Sciatic nerve (tissue), 2 donors: ENCODE measurements at regions of chr2 and their contacts with region 1.

Region 1: DNA sequence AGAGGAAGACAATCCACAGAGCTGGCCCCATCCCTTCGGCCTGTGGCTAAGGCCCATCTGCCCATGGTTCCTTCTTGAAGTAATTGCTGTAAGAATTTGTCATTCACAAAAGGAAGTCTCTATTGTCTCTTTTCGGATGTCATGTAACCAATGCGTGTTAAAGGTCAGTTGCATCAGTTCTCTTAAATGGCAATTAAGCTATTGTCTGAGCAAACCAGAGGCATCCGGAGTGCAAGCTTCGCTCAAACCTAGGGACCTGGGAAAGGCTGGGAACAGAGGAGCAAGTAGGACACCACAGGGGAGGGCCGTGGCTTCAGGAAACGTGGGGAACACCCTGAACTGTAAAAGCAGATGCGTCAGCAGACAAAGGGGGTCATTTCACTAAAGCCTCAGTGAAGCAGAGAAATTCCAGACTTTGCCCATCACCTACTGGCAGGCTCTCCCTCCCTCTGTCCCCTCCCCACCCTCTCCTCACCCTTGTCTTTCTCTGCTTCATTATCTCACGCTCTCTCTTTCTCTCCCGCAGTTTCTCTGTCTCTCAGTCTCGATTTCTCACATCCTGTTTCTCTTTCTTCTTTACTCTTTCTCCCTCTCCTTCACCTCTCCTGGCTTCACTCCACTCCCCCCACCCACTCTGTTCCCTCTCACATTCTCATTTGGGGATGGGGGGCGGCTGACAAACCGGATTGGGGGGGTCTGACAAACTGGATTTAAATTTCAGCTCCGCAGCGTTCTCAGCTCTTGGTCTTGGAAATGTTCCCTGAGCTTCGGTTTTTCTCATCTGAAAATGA is 204.6 kb upstream of the TNP1 start:
- DNase-seq: no peak
- ATAC-seq: peak; percentile 78

Region 2: DNA sequence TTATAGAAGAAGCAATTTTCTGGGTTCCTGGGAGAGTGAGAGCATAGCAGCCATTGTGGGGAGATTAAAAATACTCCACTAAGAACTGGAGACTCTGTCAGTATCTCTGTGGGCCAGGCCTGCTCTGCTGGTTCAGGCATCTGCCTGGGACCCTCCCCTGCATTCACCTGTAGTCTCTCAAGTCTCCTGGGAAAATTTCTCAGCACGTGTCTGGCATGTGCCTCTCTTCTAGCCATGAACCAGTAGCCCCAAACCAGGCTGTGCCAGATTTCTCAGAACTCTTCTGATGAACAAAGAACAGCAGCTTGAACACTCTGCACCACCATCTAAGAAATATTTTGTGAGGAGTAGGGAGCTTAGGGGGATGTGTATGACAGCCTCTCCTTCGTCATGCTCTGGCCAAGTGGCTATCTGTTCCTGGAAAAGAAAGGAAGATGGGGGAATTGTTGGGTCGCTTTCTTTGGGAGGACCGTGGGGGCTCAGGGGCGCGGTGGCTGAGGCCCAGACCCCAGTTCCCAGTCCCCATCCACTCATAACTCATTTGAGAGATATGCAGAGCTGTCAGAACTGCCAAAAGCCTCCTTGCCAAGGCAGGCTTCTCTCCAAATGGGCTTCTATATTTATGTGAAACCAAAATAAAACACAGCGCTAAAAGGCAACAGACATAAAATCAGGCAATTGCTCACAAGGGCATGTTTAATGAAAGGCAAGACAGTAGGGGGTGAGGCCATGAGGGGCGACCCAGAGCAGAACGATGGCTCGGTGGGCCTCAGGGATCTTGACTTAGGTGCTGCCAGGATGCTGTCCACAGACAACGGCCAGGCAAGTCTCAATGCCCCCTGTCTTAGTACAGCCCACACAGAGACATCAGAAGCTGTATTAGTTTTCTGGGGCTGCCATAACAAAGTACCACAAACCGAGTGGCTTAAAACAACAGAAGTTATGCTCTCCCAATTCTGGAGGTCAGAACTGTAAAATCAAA is 89.8 kb before region 1 on chr2:
- intact Hi-C with region 1: loop called (anchors 5 kb)
- DNase-seq: no peak
- ATAC-seq: peak; percentile 85